ENCODE measurements at regions of chr16 and their contacts with region 1.

Region 1: GRCh38 chr16:55955845-55956244 is 80.7 kb upstream of the CES5A start:
- DNase-seq: peak; percentile 13 to 75
- ATAC-seq: peak in 1 of 4 donors; percentile 24
- H3K4me3 ChIP-seq: no peak overlapping the region
- H3K27ac ChIP-seq: no peak overlapping the region
- H3K4me1 ChIP-seq: no peaks in the 10 kb centered on the region
- H3K27me3 ChIP-seq: no peaks in the 10 kb centered on the region
- CTCF ChIP-seq: no peak

Region 2: GRCh38 chr16:55888546-55888945 is 67.3 kb before region 1 on chr16:
- intact Hi-C with region 1: no loop called
- DNase-seq: no peak
- ATAC-seq: no peak
- H3K4me3 ChIP-seq: no peak overlapping the region
- H3K27ac ChIP-seq: no peak overlapping the region
- H3K4me1 ChIP-seq: no peaks in the 10 kb centered on the region
- H3K27me3 ChIP-seq: peaks cover 0 to 5% (median 2%) of the 10 kb centered on the region in 3 donors
- CTCF ChIP-seq: no peak

Region 3: DNA sequence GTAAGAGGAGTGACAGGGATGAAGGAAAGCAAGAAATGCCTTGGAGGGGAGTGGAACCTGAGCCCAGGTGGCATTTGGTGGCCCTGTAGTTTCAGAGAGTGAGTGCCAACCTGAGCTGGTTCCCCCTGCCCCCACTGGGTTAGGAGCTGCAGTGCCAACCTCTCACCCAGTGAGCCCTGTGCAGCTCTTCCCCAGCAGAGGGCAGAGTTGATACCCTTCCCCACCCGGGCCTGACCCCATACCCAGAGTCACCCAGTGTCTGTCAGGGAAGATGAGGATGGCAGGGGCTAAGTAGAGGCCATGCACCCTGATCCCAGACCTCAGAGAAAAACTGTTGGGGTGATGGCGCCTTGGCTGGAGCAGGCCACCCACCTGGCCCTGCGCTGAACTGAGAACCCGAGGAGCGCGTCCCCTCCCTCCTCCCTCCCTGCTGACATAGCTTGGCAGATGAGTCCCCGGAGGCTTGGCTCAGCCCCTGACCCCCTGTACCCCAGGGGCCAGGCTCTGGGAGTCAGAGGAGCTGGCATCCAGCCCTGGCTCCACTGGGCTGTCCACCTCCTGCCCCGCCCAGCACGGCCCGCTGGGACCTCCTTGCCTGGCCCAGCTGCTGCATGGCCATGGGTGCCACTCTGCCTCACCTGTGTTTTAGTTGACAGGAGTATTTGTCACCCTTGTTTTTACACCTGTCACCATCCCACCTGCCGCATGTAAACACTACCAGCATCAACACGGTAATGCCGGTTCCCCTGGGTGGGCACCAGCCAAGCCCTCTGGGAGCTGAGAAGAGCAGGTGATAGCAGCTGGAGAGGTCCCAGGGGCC is 355.6 kb after region 1 on chr16:
- intact Hi-C with region 1: loop called in 1 of 2 experiments (anchors 5 kb)
- DNase-seq: no peak
- ATAC-seq: no peak
- H3K4me3 ChIP-seq: no peak overlapping the region
- H3K27ac ChIP-seq: no peak overlapping the region
- H3K4me1 ChIP-seq: no peaks in the 10 kb centered on the region
- H3K27me3 ChIP-seq: no peaks in the 10 kb centered on the region
- CTCF ChIP-seq: no peak